Colonic mucosa (tissue), 4 donors: ENCODE measurements at regions of chr17 and their contacts with region 1.

Region 1: DNA sequence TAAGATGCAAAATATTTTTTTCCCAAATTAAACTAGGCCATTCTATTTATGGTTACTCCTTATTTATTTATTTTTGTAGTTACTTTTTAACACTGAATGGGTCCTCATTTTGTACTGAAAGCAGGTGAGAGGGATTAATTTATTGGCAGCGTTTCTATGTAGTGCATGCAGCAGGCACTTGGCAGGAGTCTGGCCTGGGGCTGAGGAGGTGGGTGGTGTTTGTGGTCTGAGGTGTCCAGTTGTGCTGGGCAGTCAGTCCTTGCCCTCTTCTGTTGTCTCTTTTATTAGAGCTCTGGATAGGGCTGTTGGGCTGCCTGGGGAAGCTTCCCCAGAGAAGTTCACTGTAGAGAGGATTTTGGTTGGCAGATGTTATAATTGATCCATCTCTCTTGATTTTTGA is 12.7 kb downstream of the SEC14L1 start:
- DNase-seq: no peak
- H3K4me3 ChIP-seq: no peak overlapping the region
- H3K27ac ChIP-seq: no peak overlapping the region
- H3K4me1 ChIP-seq: peaks cover 4% of the 10 kb centered on the region
- H3K27me3 ChIP-seq: no peaks in the 10 kb centered on the region
- CTCF ChIP-seq: no peak

Region 2: DNA sequence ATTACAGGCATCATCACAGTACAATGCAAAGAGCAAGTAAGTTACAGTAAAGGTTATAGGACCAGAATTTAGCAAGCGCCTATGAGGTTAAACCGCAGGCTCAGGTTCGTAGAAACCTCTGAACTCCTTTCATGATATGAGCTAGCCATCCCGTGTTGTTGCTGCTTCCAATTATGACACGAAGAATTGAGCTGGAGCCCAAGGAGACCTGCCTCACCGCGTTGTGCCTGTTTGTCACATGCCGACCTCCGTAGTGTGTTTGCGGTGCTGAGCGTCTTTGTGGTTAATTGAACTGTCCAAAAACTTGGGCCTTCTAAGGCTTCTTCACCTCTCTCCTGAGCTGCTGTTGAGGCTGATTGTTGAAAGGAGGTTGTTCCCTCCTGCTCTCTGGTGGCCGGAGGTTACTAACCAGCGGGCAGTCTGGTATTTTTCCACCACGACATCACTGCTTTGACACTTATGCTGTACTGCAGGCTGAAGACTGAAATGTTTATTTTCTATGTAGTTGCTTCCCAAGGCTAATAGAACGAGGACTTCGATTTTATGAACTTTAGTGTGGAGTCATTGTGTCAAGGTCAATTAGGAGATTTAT is 54.8 kb after region 1 on chr17:
- intact Hi-C with region 1: loop called (anchors 10 kb)
- DNase-seq: no peak
- H3K4me3 ChIP-seq: no peak overlapping the region
- H3K27ac ChIP-seq: no peak overlapping the region
- H3K4me1 ChIP-seq: no peaks in the 10 kb centered on the region
- H3K27me3 ChIP-seq: no peaks in the 10 kb centered on the region
- CTCF ChIP-seq: no peak

Region 3: DNA sequence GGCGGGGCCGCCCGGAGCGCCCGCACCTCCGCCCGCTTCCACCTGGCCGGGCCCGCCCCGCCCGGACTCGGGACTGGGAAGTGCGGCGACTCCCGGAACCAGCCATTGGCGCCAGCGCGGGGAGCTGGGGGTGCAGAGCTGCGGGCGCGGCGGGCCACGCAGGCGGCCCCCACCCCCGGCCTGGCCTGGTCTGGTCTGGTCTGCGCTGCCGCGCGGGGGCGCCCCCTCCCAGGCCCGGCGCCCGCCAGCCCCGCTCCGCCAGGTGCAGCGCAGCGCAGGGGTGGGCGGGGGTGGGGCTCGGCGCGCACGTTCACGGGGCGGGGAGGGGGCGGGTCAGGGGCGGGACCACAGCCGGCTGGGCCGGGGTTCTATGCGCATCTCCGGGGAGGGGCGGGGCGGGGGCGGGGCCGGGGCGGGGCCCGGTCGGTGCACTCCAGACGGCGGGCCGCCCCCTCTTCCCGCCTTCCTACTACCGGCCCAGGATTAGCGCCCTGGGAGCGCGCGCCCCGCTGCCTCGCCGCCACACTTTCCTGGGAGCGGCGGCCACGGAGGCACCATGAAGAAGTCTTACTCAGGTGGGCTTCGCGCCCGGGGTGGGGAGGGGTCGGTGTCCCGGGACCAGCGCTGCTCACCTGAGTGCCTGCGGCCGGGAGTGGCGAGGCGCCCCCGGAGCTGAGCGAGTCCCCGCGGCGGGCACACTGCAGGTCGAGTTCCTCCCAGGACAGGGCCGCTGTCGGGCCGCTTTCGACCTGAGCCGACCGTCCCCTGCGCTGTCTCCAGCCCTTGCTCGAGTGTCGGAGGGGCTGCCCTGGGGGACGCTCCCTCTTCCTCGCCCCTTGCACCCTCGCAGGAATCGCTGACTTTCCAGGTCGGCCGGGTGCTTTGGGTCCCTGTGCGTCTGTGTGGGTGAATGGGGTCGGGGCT is 127.8 kb after region 1 on chr17:
- intact Hi-C with region 1: no loop called
- DNase-seq: peak; percentile 75
- H3K4me3 ChIP-seq: peak overlapping the region; percentile 73
- H3K27ac ChIP-seq: peak overlapping the region; percentile 86
- H3K4me1 ChIP-seq: peaks cover 13% of the 10 kb centered on the region
- H3K27me3 ChIP-seq: no peaks in the 10 kb centered on the region
- CTCF ChIP-seq: no peak